H1 (cell line): ENCODE measurements at regions of chr14 and their contacts with region 1.

Region 1: GRCh38 chr14:23910101-23910875 is 43.3 kb upstream of the DHRS4 start:
- DNase-seq: peak; percentile 81 to 92
- H3K4me3 ChIP-seq: no peak overlapping the region
- H3K27ac ChIP-seq: no peak overlapping the region
- H3K4me1 ChIP-seq: peaks cover 0 to 9% (median 4%) of the 10 kb centered on the region in 4 experiments; a peak in 3 of 7 replicates
- H3K27me3 ChIP-seq: no peaks in the 10 kb centered on the region
- CTCF ChIP-seq: peak; percentile 67 to 93 (median 84)
- EP300 ChIP-seq: no peak
- POLR2A ChIP-seq: no peak
- RAD21 ChIP-seq: peak; percentile 93

Region 2: GRCh38 chr14:23588884-23589598 is 321.2 kb before region 1 on chr14:
- CTCF ChIA-PET with region 1: interaction called, 22 read pairs
- POLR2A ChIA-PET with region 1: no interaction called
- DNase-seq: peak in 1 of 2 experiments; percentile 87
- H3K4me3 ChIP-seq: no peak overlapping the region
- H3K27ac ChIP-seq: no peak overlapping the region
- H3K4me1 ChIP-seq: peaks cover 0 to 6% (median under 1%) of the 10 kb centered on the region in 4 experiments; a peak in 2 of 7 replicates
- H3K27me3 ChIP-seq: no peaks in the 10 kb centered on the region
- CTCF ChIP-seq: peak; percentile 88 to 95 (median 95)
- EP300 ChIP-seq: no peak
- POLR2A ChIP-seq: no peak
- RAD21 ChIP-seq: peak; percentile 90 to 92

Region 3: GRCh38 chr14:23640524-23641141 is 269.7 kb before region 1 on chr14:
- CTCF ChIA-PET with region 1: interaction called, 13 read pairs
- POLR2A ChIA-PET with region 1: no interaction called
- DNase-seq: no peak
- H3K4me3 ChIP-seq: no peak overlapping the region
- H3K27ac ChIP-seq: no peak overlapping the region
- H3K4me1 ChIP-seq: peaks cover 2 to 6% (median 2%) of the 10 kb centered on the region in 4 experiments; a peak in 5 of 7 replicates
- H3K27me3 ChIP-seq: no peaks in the 10 kb centered on the region
- CTCF ChIP-seq: no peak
- EP300 ChIP-seq: no peak
- POLR2A ChIP-seq: no peak
- RAD21 ChIP-seq: no peak

Region 4: GRCh38 chr14:23712287-23712686 is 198.0 kb before region 1 on chr14:
- CTCF ChIA-PET with region 1: no interaction called
- POLR2A ChIA-PET with region 1: no interaction called
- DNase-seq: no peak
- H3K4me3 ChIP-seq: no peak overlapping the region
- H3K27ac ChIP-seq: no peak overlapping the region
- H3K4me1 ChIP-seq: no peaks in the 10 kb centered on the region
- H3K27me3 ChIP-seq: no peaks in the 10 kb centered on the region
- CTCF ChIP-seq: no peak
- EP300 ChIP-seq: no peak
- POLR2A ChIP-seq: no peak
- RAD21 ChIP-seq: no peak

Region 5: GRCh38 chr14:23894362-23895052 is 15.8 kb before region 1 on chr14:
- CTCF ChIA-PET with region 1: interaction called, 17 read pairs
- POLR2A ChIA-PET with region 1: no interaction called
- DNase-seq: no peak
- H3K4me3 ChIP-seq: no peak overlapping the region
- H3K27ac ChIP-seq: no peak overlapping the region
- H3K4me1 ChIP-seq: no peaks in the 10 kb centered on the region
- H3K27me3 ChIP-seq: no peaks in the 10 kb centered on the region
- CTCF ChIP-seq: no peak
- EP300 ChIP-seq: no peak
- POLR2A ChIP-seq: no peak
- RAD21 ChIP-seq: no peak

Region 6: GRCh38 chr14:23929822-23930294 is 19.6 kb after region 1 on chr14:
- CTCF ChIA-PET with region 1: interaction called, 31 read pairs
- POLR2A ChIA-PET with region 1: no interaction called
- DNase-seq: peak; percentile 34 to 97
- H3K4me3 ChIP-seq: no peak overlapping the region
- H3K27ac ChIP-seq: no peak overlapping the region
- H3K4me1 ChIP-seq: no peaks in the 10 kb centered on the region
- H3K27me3 ChIP-seq: no peaks in the 10 kb centered on the region
- CTCF ChIP-seq: peak; percentile 86 to 93 (median 92)
- EP300 ChIP-seq: no peak
- POLR2A ChIP-seq: no peak
- RAD21 ChIP-seq: peak; percentile 82 to 84